ENCODE measurements at regions of chr17 and their contacts with region 1.

Region 1: GRCh38 chr17:57671667-57672632 is 73.1 kb downstream of the CCDC182 start:
- DNase-seq: peak; percentile 88
- H3K4me3 ChIP-seq: peak overlapping the region; percentile 5
- H3K27ac ChIP-seq: peak overlapping the region; percentile 57
- H3K4me1 ChIP-seq: peaks cover 26% of the 10 kb centered on the region
- CTCF ChIP-seq: peak; percentile 97

Region 2: GRCh38 chr17:57243171-57243948 is 428.6 kb before region 1 on chr17:
- CTCF ChIA-PET with region 1: no interaction called
- POLR2A ChIA-PET with region 1: no interaction called
- intact Hi-C with region 1: loop called (anchors 5 kb)
- DNase-seq: peak; percentile 85
- H3K4me3 ChIP-seq: no peak overlapping the region
- H3K27ac ChIP-seq: no peak overlapping the region
- H3K4me1 ChIP-seq: peaks cover 19% of the 10 kb centered on the region
- CTCF ChIP-seq: peak; percentile 100

Region 3: DNA sequence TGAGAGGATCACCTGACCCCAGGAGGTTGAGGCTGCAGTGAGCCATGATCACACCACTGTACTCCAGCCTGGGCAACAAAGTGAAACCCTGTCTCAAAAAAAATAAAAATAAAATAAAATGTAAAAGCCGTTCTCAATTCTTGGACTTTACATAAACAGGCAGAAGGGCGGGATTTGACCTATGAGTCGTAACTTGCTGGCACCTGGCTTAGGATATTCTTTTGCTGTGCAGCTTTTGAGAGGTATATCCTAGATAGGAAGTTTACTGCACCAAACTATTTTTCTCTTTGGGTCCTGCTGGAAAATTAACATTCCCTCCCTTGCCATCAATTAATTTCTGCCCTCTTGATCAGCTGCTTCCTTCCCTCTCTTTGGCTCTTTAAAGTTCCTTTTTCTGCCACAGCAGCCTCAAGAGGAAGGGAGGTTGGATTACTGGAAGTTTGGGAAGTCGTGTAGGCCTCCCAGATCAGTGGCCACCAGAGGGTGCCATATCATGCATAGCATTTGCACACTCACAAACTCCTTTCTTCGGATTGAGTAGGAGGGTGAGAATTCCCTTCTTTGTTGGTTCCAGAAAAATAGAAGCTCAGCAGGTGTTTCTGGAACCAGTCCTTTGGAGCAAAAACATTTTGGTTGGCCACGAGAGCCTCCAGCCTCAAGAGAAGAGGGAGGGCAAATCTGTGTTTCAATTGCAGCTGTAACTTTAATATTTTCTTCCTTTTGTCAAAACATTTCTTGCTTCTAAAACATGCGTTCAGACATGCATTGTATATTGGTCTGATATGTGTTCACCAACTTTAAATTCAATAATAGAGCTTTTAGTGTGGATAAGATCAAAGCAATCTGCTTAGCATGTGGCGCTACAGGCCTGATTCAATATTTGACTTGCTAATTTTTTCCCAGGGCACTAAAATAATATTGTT is 74.2 kb before region 1 on chr17:
- CTCF ChIA-PET with region 1: interaction called, 8 read pairs
- POLR2A ChIA-PET with region 1: interaction called, 6 read pairs
- intact Hi-C with region 1: loop called (anchors 1 kb)
- DNase-seq: peak; percentile 42
- H3K4me3 ChIP-seq: no peak overlapping the region
- H3K27ac ChIP-seq: peak overlapping the region; percentile 3
- H3K4me1 ChIP-seq: peaks cover 45% of the 10 kb centered on the region
- CTCF ChIP-seq: peak; percentile 97

Region 4: DNA sequence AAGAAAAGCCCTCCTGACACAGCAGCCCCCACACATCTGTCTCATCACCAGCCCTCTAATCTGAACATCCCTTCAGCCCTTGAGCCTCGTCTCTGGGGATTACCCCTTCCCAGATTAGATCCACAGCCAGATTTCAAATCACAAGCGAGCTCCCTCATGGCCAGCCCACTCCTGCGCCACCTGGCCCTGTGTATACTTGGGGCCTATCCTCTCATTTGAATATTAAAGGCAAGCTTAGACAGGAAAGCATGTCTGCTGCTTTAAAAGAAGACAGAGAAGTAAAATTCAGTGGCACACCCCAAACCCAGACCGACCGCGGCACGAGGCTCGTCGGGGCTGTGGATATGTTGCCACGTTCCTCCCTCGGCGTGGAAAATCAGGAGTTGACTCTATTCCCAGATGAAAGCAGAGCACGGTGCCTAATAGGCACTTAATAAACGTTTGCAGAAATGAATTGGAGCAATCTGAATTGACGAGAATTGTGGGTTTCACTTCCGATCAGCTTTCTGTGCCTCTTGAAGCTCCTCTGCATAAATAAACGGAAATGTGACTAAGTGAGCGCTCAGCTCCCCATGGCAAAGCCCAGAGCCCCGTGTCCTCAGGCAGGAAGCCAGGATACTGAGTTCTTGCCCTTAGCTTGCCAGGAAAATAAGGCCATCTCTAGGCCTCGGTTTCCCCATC is 34.8 kb before region 1 on chr17:
- CTCF ChIA-PET with region 1: interaction called, 4 read pairs
- POLR2A ChIA-PET with region 1: interaction called, 3 read pairs
- intact Hi-C with region 1: loop called (anchors 5 kb)
- DNase-seq: peak; percentile 76
- H3K4me3 ChIP-seq: peak overlapping the region; percentile 51
- H3K27ac ChIP-seq: peak overlapping the region; percentile 94
- H3K4me1 ChIP-seq: peaks cover 42% of the 10 kb centered on the region
- CTCF ChIP-seq: no peak

Measured in OCI-LY7 (cell line).